MCF 10A (cell line): ENCODE measurements at regions of chr9 and their contacts with region 1.

Region 1: GRCh38 chr9:115694014-115694413 is 459.6 kb upstream of the PAPPA start:
- DNase-seq: peak; percentile 95
- H3K4me3 Mint-ChIP-seq: no peak overlapping the region
- H3K27ac Mint-ChIP-seq: peak overlapping the region; percentile 44
- H3K4me1 Mint-ChIP-seq: peaks cover 32% of the 10 kb centered on the region
- H3K27me3 Mint-ChIP-seq: no peaks in the 10 kb centered on the region
- CTCF ChIP-seq: peak; percentile 51

Region 2: GRCh38 chr9:115643948-115644727 is 49.9 kb before region 1 on chr9:
- CTCF ChIA-PET with region 1: no interaction called
- POLR2A ChIA-PET with region 1: no interaction called
- intact Hi-C with region 1: loop called (anchors 1 kb)
- DNase-seq: peak; percentile 50
- H3K4me3 Mint-ChIP-seq: peak overlapping the region; percentile 4
- H3K27ac Mint-ChIP-seq: peak overlapping the region; percentile 55
- H3K4me1 Mint-ChIP-seq: peaks cover 36% of the 10 kb centered on the region
- H3K27me3 Mint-ChIP-seq: no peaks in the 10 kb centered on the region
- CTCF ChIP-seq: no peak

Region 3: GRCh38 chr9:115883457-115884329 is 189.7 kb after region 1 on chr9:
- CTCF ChIA-PET with region 1: interaction called, 9 read pairs
- POLR2A ChIA-PET with region 1: no interaction called
- intact Hi-C with region 1: loop called (anchors 1 kb)
- DNase-seq: peak; percentile 86
- H3K4me3 Mint-ChIP-seq: no peak overlapping the region
- H3K27ac Mint-ChIP-seq: no peak overlapping the region
- H3K4me1 Mint-ChIP-seq: peaks cover 6% of the 10 kb centered on the region
- H3K27me3 Mint-ChIP-seq: no peaks in the 10 kb centered on the region
- CTCF ChIP-seq: peak; percentile 74

Region 4: GRCh38 chr9:116000748-116001329 is 306.8 kb after region 1 on chr9:
- CTCF ChIA-PET with region 1: no interaction called
- POLR2A ChIA-PET with region 1: no interaction called
- intact Hi-C with region 1: loop called (anchors 5 kb)
- DNase-seq: peak; percentile 45
- H3K4me3 Mint-ChIP-seq: no peak overlapping the region
- H3K27ac Mint-ChIP-seq: no peak overlapping the region
- H3K4me1 Mint-ChIP-seq: peaks cover 44% of the 10 kb centered on the region
- H3K27me3 Mint-ChIP-seq: no peaks in the 10 kb centered on the region
- CTCF ChIP-seq: peak; percentile 37

Region 5: GRCh38 chr9:116494815-116495634 is 801.0 kb after region 1 on chr9:
- CTCF ChIA-PET with region 1: no interaction called
- POLR2A ChIA-PET with region 1: interaction called, 4 read pairs
- intact Hi-C with region 1: loop called (anchors 10 kb)
- DNase-seq: peak; percentile 61
- H3K4me3 Mint-ChIP-seq: no peak overlapping the region
- H3K27ac Mint-ChIP-seq: no peak overlapping the region
- H3K4me1 Mint-ChIP-seq: peaks cover 5% of the 10 kb centered on the region
- H3K27me3 Mint-ChIP-seq: no peaks in the 10 kb centered on the region
- CTCF ChIP-seq: peak; percentile 61

Region 6: GRCh38 chr9:116646661-116647512 is 952.9 kb after region 1 on chr9:
- CTCF ChIA-PET with region 1: interaction called, 4 read pairs
- POLR2A ChIA-PET with region 1: no interaction called
- intact Hi-C with region 1: loop called (anchors 1 kb)
- DNase-seq: peak; percentile 59
- H3K4me3 Mint-ChIP-seq: no peak overlapping the region
- H3K27ac Mint-ChIP-seq: no peak overlapping the region
- H3K4me1 Mint-ChIP-seq: peaks cover 6% of the 10 kb centered on the region
- H3K27me3 Mint-ChIP-seq: no peaks in the 10 kb centered on the region
- CTCF ChIP-seq: peak; percentile 80